Activated CD4-positive, alpha-beta T cell treated with anti-CD3 and anti-CD28 coated beads, Interleukin-2, amount 10 ng/mL, durations not matched to agents 7 days and 5 days (primary cell): ENCODE measurements at regions of chr19 and their contacts with region 1.

Region 1: DNA sequence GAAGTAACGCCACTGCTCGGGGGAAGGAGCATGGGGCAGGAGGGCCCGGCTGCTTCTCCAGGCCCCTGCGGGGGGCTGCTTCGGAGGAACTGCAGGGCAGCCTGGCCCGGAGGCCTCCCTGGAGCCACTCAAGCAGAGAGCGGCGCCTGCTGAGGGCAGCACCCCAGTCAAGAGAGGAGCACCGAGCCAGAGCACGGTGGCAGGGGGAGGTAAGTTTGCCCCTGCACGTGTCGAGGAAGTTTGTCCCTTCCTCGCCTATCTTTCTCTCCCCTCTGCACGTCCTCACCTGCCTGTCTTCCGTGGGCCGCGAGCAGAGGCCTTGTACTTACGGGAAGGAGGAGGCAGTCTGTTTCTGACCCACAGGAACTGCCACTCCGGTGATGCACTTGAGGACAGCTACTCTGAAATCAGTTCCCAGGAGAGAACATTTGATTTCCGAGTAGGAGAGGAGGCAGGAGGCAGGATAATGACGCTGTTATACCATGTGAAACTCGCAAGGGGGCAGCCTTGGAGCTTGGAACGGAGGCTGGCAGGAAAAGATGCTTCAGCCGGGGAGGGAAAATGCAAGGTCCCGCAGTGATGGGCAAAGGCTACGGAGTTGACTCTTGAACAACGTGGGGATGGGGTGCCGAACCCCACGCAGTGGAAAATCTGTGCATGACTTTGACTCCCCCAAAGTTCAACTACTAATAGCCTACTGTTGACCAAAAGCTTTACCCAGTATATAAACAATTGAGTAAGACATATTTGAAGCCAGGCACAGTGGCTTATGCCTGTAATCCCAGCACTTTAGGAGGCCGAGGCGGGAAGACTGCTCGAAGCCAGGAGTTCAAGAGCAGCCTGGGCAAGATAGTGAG is 5.0 kb downstream of the FFAR1 start:
- DNase-seq: peak; percentile 77
- H3K4me3 Mint-ChIP-seq: no peak overlapping the region
- H3K27ac Mint-ChIP-seq: no peak overlapping the region
- H3K4me1 Mint-ChIP-seq: peaks cover 21% of the 10 kb centered on the region
- H3K27me3 Mint-ChIP-seq: no peaks in the 10 kb centered on the region

Region 2: GRCh38 chr19:35269421-35270117 is 83.1 kb before region 1 on chr19:
- CTCF ChIA-PET with region 1: no interaction called
- POLR2A ChIA-PET with region 1: no interaction called
- DNase-seq: peak; percentile 79
- H3K4me3 Mint-ChIP-seq: peak overlapping the region; percentile 63
- H3K27ac Mint-ChIP-seq: peak overlapping the region; percentile 80
- H3K4me1 Mint-ChIP-seq: peaks cover 41% of the 10 kb centered on the region
- H3K27me3 Mint-ChIP-seq: no peaks in the 10 kb centered on the region

Region 3: GRCh38 chr19:35320065-35320713 is 32.5 kb before region 1 on chr19:
- CTCF ChIA-PET with region 1: no interaction called
- POLR2A ChIA-PET with region 1: no interaction called
- DNase-seq: no peak
- H3K4me3 Mint-ChIP-seq: no peak overlapping the region
- H3K27ac Mint-ChIP-seq: no peak overlapping the region
- H3K4me1 Mint-ChIP-seq: peaks cover 5% of the 10 kb centered on the region
- H3K27me3 Mint-ChIP-seq: peaks cover 13% of the 10 kb centered on the region

Region 4: DNA sequence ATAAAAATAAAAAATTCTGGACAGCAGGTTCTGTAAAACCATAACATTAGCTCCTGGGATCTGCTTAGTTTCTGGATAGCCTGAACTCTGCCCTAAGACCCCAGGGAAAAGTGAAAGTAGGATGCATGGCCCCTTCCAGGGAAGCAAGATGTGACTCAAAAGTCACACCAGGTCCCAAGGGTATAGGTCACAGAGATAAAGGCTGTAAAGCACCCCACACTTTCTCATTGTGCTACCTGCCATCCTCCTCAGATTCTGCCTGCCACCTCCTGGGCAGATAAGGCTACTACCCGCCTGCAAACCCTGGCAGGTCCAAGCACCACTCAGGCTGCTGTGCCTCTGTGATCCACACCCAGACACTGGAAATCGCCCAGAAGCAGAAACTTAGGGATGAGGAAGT is 116.0 kb after region 1 on chr19:
- CTCF ChIA-PET with region 1: interaction called, 11 read pairs
- POLR2A ChIA-PET with region 1: no interaction called
- DNase-seq: peak; percentile 71
- H3K4me3 Mint-ChIP-seq: no peak overlapping the region
- H3K27ac Mint-ChIP-seq: no peak overlapping the region
- H3K4me1 Mint-ChIP-seq: peaks cover 15% of the 10 kb centered on the region
- H3K27me3 Mint-ChIP-seq: peaks cover 4% of the 10 kb centered on the region

Region 5: GRCh38 chr19:35495107-35496064 is 142.7 kb after region 1 on chr19:
- CTCF ChIA-PET with region 1: interaction called, 11 read pairs
- POLR2A ChIA-PET with region 1: no interaction called
- DNase-seq: peak; percentile 64
- H3K4me3 Mint-ChIP-seq: no peak overlapping the region
- H3K27ac Mint-ChIP-seq: no peak overlapping the region
- H3K4me1 Mint-ChIP-seq: peaks cover 7% of the 10 kb centered on the region
- H3K27me3 Mint-ChIP-seq: peaks cover 9% of the 10 kb centered on the region